ENCODE measurements at regions of chr1 and their contacts with region 1.

Region 1: GRCh38 chr1:107529502-107530149 is 388.8 kb downstream of the NTNG1 start:
- DNase-seq: no peak
- H3K4me3 ChIP-seq: no peak overlapping the region
- H3K27ac ChIP-seq: no peak overlapping the region
- H3K4me1 ChIP-seq: peaks cover 0 to 3% (median under 1%) of the 10 kb centered on the region in 4 experiments; a peak in 2 of 7 replicates
- H3K27me3 ChIP-seq: no peaks in the 10 kb centered on the region
- CTCF ChIP-seq: peak; percentile 43 to 89 (median 84)
- EP300 ChIP-seq: no peak
- POLR2A ChIP-seq: no peak
- RAD21 ChIP-seq: peak; percentile 94

Region 2: DNA sequence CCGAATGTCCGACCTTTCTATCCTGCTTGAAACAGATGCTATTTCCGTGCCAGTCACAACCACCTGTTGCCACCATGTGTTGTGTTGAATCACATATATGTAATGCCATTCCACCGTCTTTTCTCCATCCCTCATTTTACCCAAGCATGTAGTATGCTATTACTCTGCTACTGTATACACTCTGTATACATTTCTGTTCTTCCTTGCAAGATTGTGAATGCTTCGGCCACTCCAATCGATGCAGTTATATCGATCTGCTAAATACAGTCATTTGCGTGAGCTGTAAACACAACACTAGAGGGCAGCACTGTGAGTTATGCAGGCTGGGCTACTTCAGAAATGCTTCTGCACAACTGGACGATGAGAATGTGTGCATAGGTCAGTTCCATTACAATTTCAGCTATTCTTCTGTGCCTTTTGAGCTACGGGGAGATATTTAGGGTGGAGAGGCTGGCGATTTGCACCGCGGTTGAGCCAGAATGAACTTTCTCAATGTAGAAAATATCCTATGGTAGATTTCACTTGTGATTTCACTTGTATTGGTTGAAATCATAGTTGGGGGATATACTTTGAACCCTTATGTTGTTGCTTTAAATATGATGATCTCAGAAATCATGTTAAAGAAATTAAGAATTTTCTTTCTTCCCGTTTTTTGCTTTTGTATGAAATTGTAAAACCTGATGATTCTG is 98.9 kb before region 1 on chr1:
- CTCF ChIA-PET with region 1: interaction called, 14 read pairs
- POLR2A ChIA-PET with region 1: no interaction called
- DNase-seq: no peak
- H3K4me3 ChIP-seq: no peak overlapping the region
- H3K27ac ChIP-seq: no peak overlapping the region
- H3K4me1 ChIP-seq: peaks cover 0 to 6% (median 3%) of the 10 kb centered on the region in 4 experiments; a peak in 3 of 7 replicates
- H3K27me3 ChIP-seq: no peaks in the 10 kb centered on the region
- CTCF ChIP-seq: peak; percentile 13 to 90 (median 51)
- EP300 ChIP-seq: no peak
- POLR2A ChIP-seq: no peak
- RAD21 ChIP-seq: peak; percentile 46 to 65

Region 3: GRCh38 chr1:107474877-107475612 is 54.6 kb before region 1 on chr1:
- CTCF ChIA-PET with region 1: interaction called, 10 read pairs
- POLR2A ChIA-PET with region 1: no interaction called
- DNase-seq: no peak
- H3K4me3 ChIP-seq: no peak overlapping the region
- H3K27ac ChIP-seq: no peak overlapping the region
- H3K4me1 ChIP-seq: no peaks in the 10 kb centered on the region
- H3K27me3 ChIP-seq: no peaks in the 10 kb centered on the region
- CTCF ChIP-seq: no peak
- EP300 ChIP-seq: no peak
- POLR2A ChIP-seq: no peak
- RAD21 ChIP-seq: no peak

Region 4: GRCh38 chr1:107545056-107545577 is 15.5 kb after region 1 on chr1:
- CTCF ChIA-PET with region 1: interaction called, 27 read pairs
- POLR2A ChIA-PET with region 1: no interaction called
- DNase-seq: no peak
- H3K4me3 ChIP-seq: no peak overlapping the region
- H3K27ac ChIP-seq: no peak overlapping the region
- H3K4me1 ChIP-seq: no peaks in the 10 kb centered on the region
- H3K27me3 ChIP-seq: no peaks in the 10 kb centered on the region
- CTCF ChIP-seq: no peak
- EP300 ChIP-seq: no peak
- POLR2A ChIP-seq: no peak
- RAD21 ChIP-seq: no peak

Region 5: DNA sequence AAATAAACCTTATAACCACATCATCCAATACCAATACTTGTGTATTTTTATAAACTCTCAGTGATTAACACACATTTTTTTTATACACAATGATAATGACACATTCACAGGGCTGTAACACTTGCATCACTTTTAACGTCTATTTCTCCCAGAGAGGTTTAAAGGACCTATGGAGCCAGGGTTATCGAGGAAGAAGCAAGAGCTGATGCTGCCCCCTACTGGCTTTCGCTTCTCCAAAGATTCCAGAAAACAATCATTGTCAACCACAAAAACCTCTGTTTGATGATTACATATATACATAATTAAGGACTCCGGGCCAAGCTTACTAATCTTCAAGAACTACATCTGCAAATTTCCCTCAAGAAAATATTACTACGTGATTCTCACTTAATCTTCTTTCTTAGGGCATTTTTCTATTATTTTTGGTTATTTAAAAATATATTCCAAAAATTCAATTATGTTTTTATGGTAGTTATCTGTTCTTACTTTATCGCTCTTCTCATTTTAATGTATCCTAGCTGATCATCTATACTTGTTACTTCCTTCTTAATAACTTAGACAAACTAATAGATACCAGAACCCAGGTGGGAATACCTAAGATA is 220.8 kb after region 1 on chr1:
- CTCF ChIA-PET with region 1: interaction called, 61 read pairs
- POLR2A ChIA-PET with region 1: no interaction called
- DNase-seq: peak in 1 of 2 experiments; percentile 80
- H3K4me3 ChIP-seq: no peak overlapping the region
- H3K27ac ChIP-seq: no peak overlapping the region
- H3K4me1 ChIP-seq: peaks cover 0 to 4% (median 0%) of the 10 kb centered on the region in 4 experiments; a peak in 1 of 7 replicates
- H3K27me3 ChIP-seq: no peaks in the 10 kb centered on the region
- CTCF ChIP-seq: peak in 2 of 3 experiments; percentile 61 to 64; a peak in 3 of 4 replicates
- EP300 ChIP-seq: no peak
- POLR2A ChIP-seq: no peak
- RAD21 ChIP-seq: peak; percentile 78 to 83